ENCODE measurements at regions of chr15 and their contacts with region 1.

Region 1: GRCh38 chr15:67839929-67840748 is at the start of gene RNU6-1:
- DNase-seq: peak; percentile 95 to 98 (median 98)
- ATAC-seq: peak; percentile 84
- H3K4me3 ChIP-seq: peak within 1 kb of the TSS; percentile 56 to 75
- H3K27ac ChIP-seq: peak within 1 kb of the TSS; percentile 97 to 100
- H3K4me1 ChIP-seq: peaks cover 11 to 44% of the 10 kb centered on the region in 2 donors
- H3K27me3 ChIP-seq: peaks cover 11 to 12% of the 10 kb centered on the region in 2 donors
- CTCF ChIP-seq: no peak
- polyA plus RNA-seq, gene RNU6-1: not detected

Region 2: GRCh38 chr15:67456677-67457529 is 383.2 kb before region 1 on chr15:
- intact Hi-C with region 1: loop called in 1 of 2 experiments (anchors 2 kb)
- DNase-seq: peak; percentile 59 to 91 (median 78)
- ATAC-seq: peak; percentile 98
- H3K4me3 ChIP-seq: no peak overlapping the region
- H3K27ac ChIP-seq: no peak overlapping the region
- H3K4me1 ChIP-seq: peaks cover 0 to 5% of the 10 kb centered on the region in 2 donors
- H3K27me3 ChIP-seq: no peaks in the 10 kb centered on the region
- CTCF ChIP-seq: peak; percentile 77 to 89

Region 3: DNA sequence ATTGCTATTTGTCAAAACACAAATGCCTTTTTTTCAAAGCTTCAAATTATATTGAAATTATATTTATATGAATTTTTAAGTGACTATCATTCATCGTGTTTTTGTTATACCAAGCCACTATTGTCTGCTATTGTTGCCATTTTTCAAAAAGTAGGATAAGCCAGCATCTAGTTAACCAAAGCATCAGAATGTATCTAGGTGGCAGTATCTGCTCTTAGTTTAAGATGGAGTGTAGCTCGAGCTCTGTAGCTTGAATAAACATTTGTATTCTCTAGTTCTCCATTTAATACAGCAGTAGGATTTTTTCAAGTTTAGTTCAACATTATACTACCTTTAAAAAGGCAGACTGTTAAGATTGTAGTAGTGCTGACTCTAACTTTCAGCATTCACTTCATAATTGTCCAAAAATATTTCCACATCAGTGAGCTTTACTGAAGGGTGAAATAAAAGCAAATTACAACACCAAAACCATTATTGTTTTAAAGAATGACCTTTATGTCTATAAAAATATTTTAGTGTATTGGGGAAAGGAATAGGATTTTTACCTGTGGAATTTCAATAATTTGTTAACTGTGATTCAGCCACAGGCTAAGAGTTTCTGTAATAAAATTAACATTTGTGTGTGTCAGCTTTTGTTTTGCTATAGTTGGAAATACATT is 338.8 kb before region 1 on chr15:
- intact Hi-C with region 1: loop called in 1 of 2 experiments (anchors 10 kb)
- DNase-seq: peak in 1 of 4 donors; percentile 36
- ATAC-seq: peak; percentile 87
- H3K4me3 ChIP-seq: peak overlapping the region in 1 of 2 donors; percentile 4
- H3K27ac ChIP-seq: no peak overlapping the region
- H3K4me1 ChIP-seq: peaks cover 0 to 4% of the 10 kb centered on the region in 2 donors
- H3K27me3 ChIP-seq: no peaks in the 10 kb centered on the region
- CTCF ChIP-seq: peak in 1 of 2 donors; percentile 19

Region 4: GRCh38 chr15:68192804-68193486 is 352.8 kb after region 1 on chr15:
- intact Hi-C with region 1: no loop called
- DNase-seq: no peak
- ATAC-seq: no peak
- H3K4me3 ChIP-seq: no peak overlapping the region
- H3K27ac ChIP-seq: no peak overlapping the region
- H3K4me1 ChIP-seq: no peaks in the 10 kb centered on the region
- H3K27me3 ChIP-seq: no peaks in the 10 kb centered on the region
- CTCF ChIP-seq: no peak

Region 5: GRCh38 chr15:68352401-68353062 is 512.4 kb after region 1 on chr15:
- intact Hi-C with region 1: no loop called
- DNase-seq: peak in 1 of 4 donors; percentile 60
- ATAC-seq: peak; percentile 69
- H3K4me3 ChIP-seq: no peak overlapping the region
- H3K27ac ChIP-seq: peak overlapping the region in 1 of 2 donors; percentile 54
- H3K4me1 ChIP-seq: peaks cover 5 to 8% of the 10 kb centered on the region in 2 donors
- H3K27me3 ChIP-seq: no peaks in the 10 kb centered on the region
- CTCF ChIP-seq: no peak